Activated naive CD4-positive, alpha-beta T cell treated with anti-CD3 and anti-CD28 coated beads for 36 hours (primary cell): ENCODE measurements at regions of chrX and their contacts with region 1.

Region 1: DNA sequence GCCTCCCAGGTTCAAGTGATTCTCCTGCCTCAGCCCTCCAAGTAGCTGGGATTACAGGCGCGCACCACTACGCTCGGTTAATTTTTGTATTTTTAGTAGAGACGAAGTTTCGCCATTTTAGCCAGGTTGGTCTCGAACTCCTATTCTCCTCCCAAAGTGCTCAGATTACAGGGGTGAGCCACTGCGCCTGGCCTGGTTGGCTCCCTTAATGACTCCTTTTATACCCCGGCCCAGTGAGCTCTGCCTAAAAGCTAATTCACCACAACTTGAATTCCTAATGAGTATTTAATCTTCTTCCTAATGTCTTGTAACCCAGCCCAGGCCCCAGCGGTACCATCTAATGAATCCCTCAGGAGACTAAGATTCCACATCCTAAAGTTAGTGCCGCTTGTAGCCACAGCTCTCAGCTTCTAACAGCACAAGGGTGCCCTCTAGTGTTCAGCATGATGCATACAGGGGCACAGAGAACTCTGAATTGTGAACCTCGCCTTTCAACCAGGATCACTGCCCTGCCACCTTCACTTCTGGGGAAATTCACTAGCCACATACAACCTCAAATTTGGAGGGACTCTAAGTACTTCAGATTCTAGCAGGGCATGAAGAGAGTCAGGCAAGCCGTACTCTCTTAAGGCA is 89.5 kb downstream of the OR13H1 start:
- DNase-seq: peak; percentile 66
- H3K4me3 Mint-ChIP-seq: no peak overlapping the region
- H3K27ac Mint-ChIP-seq: no peak overlapping the region
- H3K4me1 Mint-ChIP-seq: peaks cover 2% of the 10 kb centered on the region
- H3K27me3 Mint-ChIP-seq: no peaks in the 10 kb centered on the region

Region 2: DNA sequence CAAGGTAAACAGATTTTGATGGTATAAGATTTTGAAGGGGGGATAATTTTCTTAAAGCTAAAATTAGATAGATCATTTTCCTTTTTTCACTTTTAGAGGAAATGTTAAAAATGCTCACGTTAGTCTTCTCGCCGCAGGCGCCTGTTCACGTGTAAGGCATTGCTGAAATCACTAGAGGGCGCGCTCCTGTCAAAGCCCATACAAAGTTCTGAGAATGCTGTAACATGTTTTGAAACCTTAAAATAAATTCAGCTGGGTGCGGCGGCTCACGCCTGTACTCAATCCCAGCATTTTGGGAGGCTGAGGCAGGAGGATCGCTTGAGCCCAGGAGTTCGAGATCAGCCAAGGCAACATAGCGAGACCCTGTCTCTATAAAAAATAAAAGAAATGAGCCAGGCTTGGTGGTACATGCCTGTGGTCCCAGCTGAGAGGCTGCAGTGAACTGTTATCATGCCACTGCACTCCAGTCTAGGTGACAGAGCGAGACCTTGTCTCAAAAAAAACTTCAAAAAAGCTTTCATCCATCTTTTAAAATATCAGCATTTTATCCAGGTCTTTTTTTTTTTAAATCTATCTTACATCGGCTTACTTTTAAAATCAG is 1093.6 kb before region 1 on chrX:
- CTCF ChIA-PET with region 1: no interaction called
- intact Hi-C with region 1: loop called (anchors 5 kb)
- DNase-seq: peak; percentile 65
- H3K4me3 Mint-ChIP-seq: no peak overlapping the region
- H3K27ac Mint-ChIP-seq: no peak overlapping the region
- H3K4me1 Mint-ChIP-seq: no peaks in the 10 kb centered on the region
- H3K27me3 Mint-ChIP-seq: peaks cover 6% of the 10 kb centered on the region

Region 3: GRCh38 chrX:130975947-130976346 is 657.5 kb before region 1 on chrX:
- CTCF ChIA-PET with region 1: interaction called, 3 read pairs
- intact Hi-C with region 1: loop called (anchors 1 kb)
- DNase-seq: peak; percentile 57
- H3K4me3 Mint-ChIP-seq: no peak overlapping the region
- H3K27ac Mint-ChIP-seq: no peak overlapping the region
- H3K4me1 Mint-ChIP-seq: no peaks in the 10 kb centered on the region
- H3K27me3 Mint-ChIP-seq: no peaks in the 10 kb centered on the region

Region 4: GRCh38 chrX:130994671-130995070 is 638.7 kb before region 1 on chrX:
- CTCF ChIA-PET with region 1: interaction called, 4 read pairs
- intact Hi-C with region 1: loop called (anchors 2 kb)
- DNase-seq: peak; percentile 37
- H3K4me3 Mint-ChIP-seq: no peak overlapping the region
- H3K27ac Mint-ChIP-seq: no peak overlapping the region
- H3K4me1 Mint-ChIP-seq: no peaks in the 10 kb centered on the region
- H3K27me3 Mint-ChIP-seq: peaks cover 11% of the 10 kb centered on the region

Region 5: DNA sequence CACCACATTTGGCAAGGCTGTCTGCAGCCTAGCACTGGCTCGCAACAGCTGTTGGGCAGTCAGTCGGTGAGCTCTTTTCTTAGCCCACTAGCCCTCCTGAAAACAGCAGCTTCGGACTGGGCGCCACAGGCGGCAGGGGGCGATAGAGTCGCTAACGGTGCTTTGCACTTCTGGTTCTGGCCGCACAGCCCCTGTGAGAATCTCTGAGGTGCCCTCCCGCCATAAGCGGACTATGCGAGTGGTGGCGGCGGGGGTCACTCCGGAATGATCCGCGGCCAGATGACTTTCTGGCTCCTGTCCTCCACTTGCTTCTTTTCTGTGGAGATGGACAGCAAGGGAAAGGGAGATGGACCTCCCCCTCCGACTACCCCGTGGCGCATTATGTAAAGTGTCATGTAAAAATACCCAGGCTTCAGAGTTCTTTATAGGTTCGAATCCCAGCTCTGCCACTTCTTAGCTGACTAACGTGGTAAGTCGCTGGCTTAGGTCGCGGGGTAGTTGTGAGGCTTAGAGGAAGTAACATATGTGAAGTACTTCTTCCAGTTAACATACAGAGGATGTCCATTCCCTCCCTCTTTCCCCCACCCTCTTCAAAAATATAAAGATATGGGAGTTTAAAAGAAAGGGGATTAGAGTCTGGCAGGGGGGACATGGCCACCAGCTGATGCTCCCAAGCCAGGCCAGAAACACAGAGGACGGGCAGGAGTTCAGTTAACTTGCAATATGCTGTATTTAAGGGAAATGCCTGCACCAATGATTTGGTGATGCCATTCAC is 564.3 kb before region 1 on chrX:
- CTCF ChIA-PET with region 1: no interaction called
- intact Hi-C with region 1: loop called (anchors 1 kb)
- DNase-seq: peak; percentile 28
- H3K4me3 Mint-ChIP-seq: no peak overlapping the region
- H3K27ac Mint-ChIP-seq: no peak overlapping the region
- H3K4me1 Mint-ChIP-seq: peaks cover 2% of the 10 kb centered on the region
- H3K27me3 Mint-ChIP-seq: peaks cover 37% of the 10 kb centered on the region

Region 6: GRCh38 chrX:131262737-131263679 is 370.4 kb before region 1 on chrX:
- CTCF ChIA-PET with region 1: no interaction called
- intact Hi-C with region 1: loop called (anchors 2 kb)
- DNase-seq: peak; percentile 27
- H3K4me3 Mint-ChIP-seq: no peak overlapping the region
- H3K27ac Mint-ChIP-seq: no peak overlapping the region
- H3K4me1 Mint-ChIP-seq: no peaks in the 10 kb centered on the region
- H3K27me3 Mint-ChIP-seq: peaks cover 5% of the 10 kb centered on the region

Region 7: GRCh38 chrX:131677655-131678628 is 44.5 kb after region 1 on chrX:
- CTCF ChIA-PET with region 1: interaction called, 3 read pairs
- intact Hi-C with region 1: loop called (anchors 5 kb)
- DNase-seq: peak; percentile 47
- H3K4me3 Mint-ChIP-seq: no peak overlapping the region
- H3K27ac Mint-ChIP-seq: no peak overlapping the region
- H3K4me1 Mint-ChIP-seq: no peaks in the 10 kb centered on the region
- H3K27me3 Mint-ChIP-seq: no peaks in the 10 kb centered on the region

Region 8: GRCh38 chrX:131894987-131895386 is 261.6 kb after region 1 on chrX:
- CTCF ChIA-PET with region 1: no interaction called
- intact Hi-C with region 1: no loop called
- DNase-seq: no peak
- H3K4me3 Mint-ChIP-seq: no peak overlapping the region
- H3K27ac Mint-ChIP-seq: no peak overlapping the region
- H3K4me1 Mint-ChIP-seq: peaks cover 7% of the 10 kb centered on the region
- H3K27me3 Mint-ChIP-seq: no peaks in the 10 kb centered on the region